Left cardiac atrium (tissue), 4 donors: ENCODE measurements at regions of chr21 and their contacts with region 1.

Region 1: DNA sequence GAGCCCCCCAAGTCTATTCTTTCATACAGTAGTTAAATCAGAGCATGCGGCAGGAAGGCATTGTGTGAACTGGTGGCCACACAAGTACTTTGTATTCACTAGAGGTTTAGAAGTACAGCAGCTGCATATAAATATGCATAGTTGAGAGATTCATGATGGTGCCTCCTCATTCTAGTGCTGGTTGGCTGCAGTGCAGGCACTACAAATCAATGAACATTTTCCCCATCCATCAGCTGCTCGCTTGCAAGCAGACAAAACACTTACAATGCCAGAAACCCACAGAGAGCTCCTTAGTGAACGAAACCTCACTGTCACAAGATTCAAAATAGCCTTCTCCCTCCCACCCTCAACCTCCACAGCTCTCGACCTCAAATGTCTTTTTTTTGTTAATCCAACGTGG is 726.2 kb downstream of the USP25 start:
- DNase-seq: no peak
- ATAC-seq: peak; percentile 23 to 32

Region 2: DNA sequence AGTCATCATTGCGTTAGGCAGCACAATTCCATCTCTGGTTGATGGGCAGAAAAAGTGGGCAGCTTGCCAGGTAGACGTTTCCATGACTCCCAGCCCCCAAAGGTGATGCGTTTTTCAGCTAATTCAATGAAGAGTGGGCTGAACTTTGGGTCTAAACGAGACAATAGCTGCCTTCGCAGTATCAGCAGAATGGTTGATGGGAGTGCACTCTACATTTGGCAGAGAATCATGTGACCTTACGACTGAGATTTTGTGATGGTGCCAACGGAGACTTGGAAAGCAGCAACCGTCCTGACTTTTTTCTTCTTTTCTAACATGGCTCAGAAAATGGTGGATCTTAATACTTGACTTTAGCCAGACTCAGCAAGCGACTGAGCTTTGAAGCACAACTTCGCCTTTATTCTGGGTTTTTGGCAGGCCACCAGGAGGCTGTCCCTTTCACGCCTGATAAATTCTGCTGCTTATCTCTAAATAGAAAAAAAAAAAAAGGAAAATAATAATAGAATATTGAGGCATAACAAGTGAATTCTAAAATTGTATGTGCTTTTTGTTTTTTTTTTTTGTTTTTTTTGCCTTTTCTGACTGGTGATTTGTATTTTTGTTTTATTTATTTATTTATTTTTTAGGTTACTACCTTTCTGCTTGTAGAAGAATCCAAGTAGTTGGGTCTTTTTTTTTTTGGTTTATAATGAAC is 78.6 kb after region 1 on chr21:
- intact Hi-C with region 1: loop called in 1 of 2 experiments (anchors 5 kb)
- DNase-seq: peak; percentile 78
- ATAC-seq: peak; percentile 77 to 78